ENCODE measurements at regions of chr17 and their contacts with region 1.

Region 1: GRCh38 chr17:19766422-19767270 is 18.5 kb upstream of the ALDH3A1 start:
- DNase-seq: peak; percentile 77 to 86
- ATAC-seq: peak; percentile 83 to 93
- H3K4me3 ChIP-seq: no peak overlapping the region
- H3K27ac ChIP-seq: peak overlapping the region; percentile 9 to 51; a peak in 3 of 6 replicates
- H3K4me1 ChIP-seq: peaks cover 10% of the 10 kb centered on the region
- CTCF ChIP-seq: peak; percentile 99
- EP300 ChIP-seq: no peak
- POLR2A ChIP-seq: no peak
- RAD21 ChIP-seq: peak; percentile 100

Region 2: DNA sequence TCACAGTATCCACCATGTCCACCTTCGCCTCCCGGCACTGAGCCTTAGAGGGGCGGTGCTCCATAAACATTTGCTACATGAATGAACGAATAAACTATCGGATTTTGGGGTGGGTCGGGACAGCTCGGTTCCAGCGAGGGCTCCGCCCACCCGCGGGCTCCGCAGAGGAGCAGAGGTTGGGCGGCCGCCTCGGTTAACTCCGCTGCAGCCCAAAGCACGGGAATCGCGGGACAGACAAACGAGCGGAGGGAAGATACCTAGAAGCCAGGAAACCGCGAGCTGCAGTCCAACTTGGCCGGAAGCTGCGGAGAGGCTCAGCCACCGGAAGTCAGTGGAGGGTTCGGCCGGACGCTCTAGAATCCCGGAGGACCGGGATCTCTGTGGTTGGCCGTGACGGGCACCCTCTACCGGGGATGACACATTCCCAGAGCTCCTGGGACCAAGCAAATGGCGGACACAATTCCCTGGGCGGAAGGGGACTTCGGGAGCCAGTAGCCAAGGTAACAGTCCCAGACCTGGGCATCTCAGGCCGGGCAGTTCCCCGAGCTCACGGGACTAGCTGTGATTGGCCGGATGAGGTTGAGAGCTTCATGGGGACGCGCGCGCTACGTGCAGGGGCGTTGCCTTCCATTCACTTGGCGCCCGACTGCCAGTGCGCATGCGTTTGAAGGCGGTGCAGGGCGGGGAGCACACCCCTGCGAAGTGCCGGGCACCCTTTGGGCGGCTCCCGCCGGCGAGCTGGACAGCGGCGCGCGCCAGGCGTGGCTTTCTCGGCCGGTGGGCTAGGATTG is 388.8 kb before region 1 on chr17:
- CTCF ChIA-PET with region 1: interaction called, 12 read pairs
- POLR2A ChIA-PET with region 1: interaction called, 14 read pairs
- DNase-seq: peak; percentile 100
- ATAC-seq: peak; percentile 86 to 90
- H3K4me3 ChIP-seq: peak overlapping the region; percentile 80
- H3K27ac ChIP-seq: peak overlapping the region; percentile 90 to 91
- H3K4me1 ChIP-seq: peaks cover 16% of the 10 kb centered on the region
- CTCF ChIP-seq: no peak
- EP300 ChIP-seq: no peak
- POLR2A ChIP-seq: peak; percentile 52; the same call in 1 of the 2 replicates
- RAD21 ChIP-seq: no peak

Region 3: GRCh38 chr17:19492141-19492540 is 274.5 kb before region 1 on chr17:
- CTCF ChIA-PET with region 1: interaction called, 16 read pairs
- POLR2A ChIA-PET with region 1: no interaction called
- DNase-seq: no peak
- ATAC-seq: no peak
- H3K4me3 ChIP-seq: no peak overlapping the region
- H3K27ac ChIP-seq: no peak overlapping the region
- H3K4me1 ChIP-seq: no peaks in the 10 kb centered on the region
- CTCF ChIP-seq: no peak
- EP300 ChIP-seq: no peak
- POLR2A ChIP-seq: no peak
- RAD21 ChIP-seq: no peak

Region 4: DNA sequence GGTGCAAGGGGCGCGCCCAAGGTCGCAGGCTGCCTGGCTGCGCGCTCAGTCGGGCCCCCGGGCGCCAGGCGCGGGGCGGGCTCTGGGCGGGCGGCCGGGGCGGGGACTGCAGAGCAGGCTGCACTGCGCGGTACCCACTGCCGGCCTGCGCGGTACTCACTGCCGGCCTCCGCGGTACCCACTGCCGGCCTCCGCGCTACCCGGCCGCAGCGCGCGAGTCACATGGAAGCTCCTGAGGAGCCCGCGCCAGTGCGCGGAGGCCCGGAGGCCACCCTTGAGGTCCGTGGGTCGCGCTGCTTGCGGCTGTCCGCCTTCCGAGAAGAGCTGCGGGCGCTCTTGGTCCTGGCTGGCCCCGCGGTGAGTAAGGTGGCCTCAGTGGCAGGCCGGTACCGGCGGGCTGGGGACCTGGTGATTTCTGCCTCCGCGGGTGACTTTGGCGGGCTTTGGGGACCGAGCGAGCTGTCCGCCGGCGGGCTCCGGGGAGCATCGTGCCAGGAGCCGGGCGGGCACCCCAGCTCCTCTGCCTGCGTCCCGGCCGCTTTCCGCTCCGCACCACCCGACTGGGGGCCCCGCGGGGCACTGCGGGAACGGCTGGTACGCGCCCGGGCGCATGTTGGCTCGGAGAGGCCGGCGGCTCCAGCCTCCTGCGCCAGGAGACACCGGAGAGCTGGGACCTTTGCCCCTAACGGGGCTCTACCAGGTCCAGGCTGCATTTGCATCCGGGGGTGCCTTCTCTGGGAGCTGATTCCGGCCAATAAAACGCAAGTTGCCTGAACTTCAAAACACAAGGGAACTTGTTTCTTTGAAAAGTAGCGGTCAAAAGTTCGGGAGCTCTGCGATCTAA is 232.7 kb before region 1 on chr17 and contains the start of gene SLC47A1:
- CTCF ChIA-PET with region 1: interaction called, 29 read pairs
- POLR2A ChIA-PET with region 1: no interaction called
- DNase-seq: peak; percentile 72 to 76
- ATAC-seq: peak; percentile 96 to 99
- H3K4me3 ChIP-seq: peak within 1 kb of the TSS; percentile 64
- H3K27ac ChIP-seq: peak within 1 kb of the TSS; percentile 75 to 89
- H3K4me1 ChIP-seq: peaks cover 10% of the 10 kb centered on the region; the same call in 2 of the 3 replicates
- CTCF ChIP-seq: no peak
- EP300 ChIP-seq: no peak
- POLR2A ChIP-seq: peak; percentile 83
- RAD21 ChIP-seq: no peak
- polyA plus RNA-seq, gene SLC47A1: 21.1 and 35.1 TPM in 2 replicates

Region 5: DNA sequence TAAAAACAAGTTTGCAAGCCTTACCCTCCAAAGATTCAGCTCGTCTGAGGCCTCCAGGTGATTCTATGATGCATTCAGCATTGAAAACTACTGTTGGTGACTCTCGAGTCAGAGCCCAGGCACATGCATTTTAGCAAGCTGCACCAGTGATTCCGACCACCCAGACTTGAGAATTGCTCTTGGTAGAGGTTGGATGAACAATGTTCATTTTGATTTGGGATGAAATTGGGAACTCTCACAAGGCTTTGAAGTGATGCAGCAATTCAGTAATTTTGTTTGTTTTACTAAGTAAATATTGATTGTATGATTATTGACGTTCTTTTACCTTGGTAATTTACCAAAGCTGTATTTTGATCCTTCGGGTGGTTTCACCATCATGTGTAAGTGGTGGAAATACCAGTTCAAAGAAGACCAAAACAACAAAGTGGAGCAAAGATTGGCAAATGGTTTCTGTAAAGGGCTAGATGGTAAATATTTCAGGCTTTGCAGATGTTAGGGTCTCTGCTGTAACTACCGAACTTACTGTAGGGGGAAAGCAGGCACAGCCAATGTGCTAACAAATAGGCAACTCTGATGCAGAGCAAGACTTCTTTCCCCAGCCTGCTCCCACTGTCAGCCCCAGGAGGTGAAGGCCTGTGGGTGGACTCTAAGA is 106.3 kb before region 1 on chr17:
- CTCF ChIA-PET with region 1: interaction called, 22 read pairs
- POLR2A ChIA-PET with region 1: no interaction called
- DNase-seq: no peak
- ATAC-seq: peak; percentile 21 to 37; a peak in 1 of 6 replicates
- H3K4me3 ChIP-seq: no peak overlapping the region
- H3K27ac ChIP-seq: peak overlapping the region in 1 of 2 experiments; percentile 29; a peak in 3 of 6 replicates
- H3K4me1 ChIP-seq: peaks cover 29% of the 10 kb centered on the region
- CTCF ChIP-seq: no peak
- EP300 ChIP-seq: no peak
- POLR2A ChIP-seq: no peak
- RAD21 ChIP-seq: no peak

Region 6: DNA sequence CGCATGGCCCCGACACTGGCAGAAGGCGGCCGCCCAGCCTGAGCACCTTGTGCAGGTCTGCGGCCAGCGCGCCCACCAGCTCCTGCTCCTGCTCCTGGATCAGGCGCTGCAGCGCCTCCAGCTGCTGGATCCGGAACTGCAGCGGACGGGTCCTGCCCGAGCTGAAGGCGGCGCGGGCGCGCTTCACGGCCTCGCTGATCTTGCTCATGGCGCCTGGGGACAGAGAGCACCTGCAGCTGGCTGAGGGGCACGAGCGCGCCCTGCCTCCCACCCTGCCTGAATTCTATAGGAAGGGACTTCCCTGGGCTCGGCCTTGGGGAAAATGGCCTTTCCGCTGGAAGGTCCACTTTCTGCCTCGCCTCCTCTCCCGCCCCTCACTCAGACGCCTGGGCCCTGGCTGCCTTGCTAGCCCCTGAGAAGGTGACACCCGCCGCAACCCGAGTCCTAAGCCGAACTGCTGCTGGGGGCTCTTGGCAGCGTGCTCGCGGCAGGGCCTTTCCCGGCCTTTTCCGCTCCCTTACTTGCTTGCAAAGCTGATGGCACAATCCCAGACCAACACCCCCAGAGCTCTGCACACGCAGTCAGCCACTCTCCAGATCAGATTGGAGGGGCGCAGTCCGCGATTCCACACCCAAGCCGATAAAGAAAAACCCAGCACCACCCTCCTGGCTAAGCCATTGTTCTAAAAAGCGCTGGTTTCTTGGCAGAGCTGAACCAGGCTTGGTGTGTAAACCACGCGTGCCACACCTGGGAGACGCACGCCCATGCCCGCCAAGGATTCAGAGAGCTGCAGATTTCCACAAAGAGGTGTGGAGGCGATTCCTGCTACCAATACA is 21.5 kb before region 1 on chr17:
- CTCF ChIA-PET with region 1: interaction called, 681 read pairs
- POLR2A ChIA-PET with region 1: interaction called, 30 read pairs
- DNase-seq: peak; percentile 75 to 89
- ATAC-seq: peak; percentile 12 to 62; a peak in 5 of 6 replicates
- H3K4me3 ChIP-seq: peak overlapping the region; percentile 53; the same call in 2 of the 3 replicates
- H3K27ac ChIP-seq: peak overlapping the region; percentile 98 to 100
- H3K4me1 ChIP-seq: peaks cover 80% of the 10 kb centered on the region
- CTCF ChIP-seq: peak; percentile 81
- EP300 ChIP-seq: no peak
- POLR2A ChIP-seq: peak; percentile 52
- RAD21 ChIP-seq: peak; percentile 55 to 64

Region 7: GRCh38 chr17:19787733-19788357 is 21.2 kb after region 1 on chr17:
- CTCF ChIA-PET with region 1: interaction called, 27 read pairs
- POLR2A ChIA-PET with region 1: no interaction called
- DNase-seq: no peak
- ATAC-seq: no peak; a peak in 1 of 6 replicates
- H3K4me3 ChIP-seq: no peak overlapping the region
- H3K27ac ChIP-seq: no peak overlapping the region
- H3K4me1 ChIP-seq: no peaks in the 10 kb centered on the region
- CTCF ChIP-seq: no peak
- EP300 ChIP-seq: no peak
- POLR2A ChIP-seq: no peak
- RAD21 ChIP-seq: no peak

Region 8: GRCh38 chr17:19867064-19867313 is 100.3 kb after region 1 on chr17:
- CTCF ChIA-PET with region 1: no interaction called
- POLR2A ChIA-PET with region 1: no interaction called
- DNase-seq: peak; percentile 76 to 81
- ATAC-seq: peak; percentile 85 to 87
- H3K4me3 ChIP-seq: peak overlapping the region; percentile 77
- H3K27ac ChIP-seq: peak overlapping the region; percentile 84 to 92
- H3K4me1 ChIP-seq: peaks cover 15% of the 10 kb centered on the region; the same call in 2 of the 3 replicates
- CTCF ChIP-seq: peak; percentile 34; the same call in 2 of the 3 replicates
- EP300 ChIP-seq: no peak
- POLR2A ChIP-seq: peak; percentile 41
- RAD21 ChIP-seq: peak in 1 of 2 experiments; percentile 21; a peak in 1 of 5 replicates

Region 9: GRCh38 chr17:19897901-19898300 is 131.3 kb after region 1 on chr17:
- CTCF ChIA-PET with region 1: no interaction called
- POLR2A ChIA-PET with region 1: no interaction called
- DNase-seq: peak in 1 of 2 experiments; percentile 61
- ATAC-seq: peak; percentile 44 to 73; a peak in 4 of 6 replicates
- H3K4me3 ChIP-seq: no peak overlapping the region
- H3K27ac ChIP-seq: peak overlapping the region in 1 of 2 experiments; percentile 39; a peak in 3 of 6 replicates
- H3K4me1 ChIP-seq: peaks cover 23% of the 10 kb centered on the region
- CTCF ChIP-seq: no peak
- EP300 ChIP-seq: no peak
- POLR2A ChIP-seq: no peak
- RAD21 ChIP-seq: no peak